ENCODE measurements at regions of chr1 and their contacts with region 1.

Region 1: DNA sequence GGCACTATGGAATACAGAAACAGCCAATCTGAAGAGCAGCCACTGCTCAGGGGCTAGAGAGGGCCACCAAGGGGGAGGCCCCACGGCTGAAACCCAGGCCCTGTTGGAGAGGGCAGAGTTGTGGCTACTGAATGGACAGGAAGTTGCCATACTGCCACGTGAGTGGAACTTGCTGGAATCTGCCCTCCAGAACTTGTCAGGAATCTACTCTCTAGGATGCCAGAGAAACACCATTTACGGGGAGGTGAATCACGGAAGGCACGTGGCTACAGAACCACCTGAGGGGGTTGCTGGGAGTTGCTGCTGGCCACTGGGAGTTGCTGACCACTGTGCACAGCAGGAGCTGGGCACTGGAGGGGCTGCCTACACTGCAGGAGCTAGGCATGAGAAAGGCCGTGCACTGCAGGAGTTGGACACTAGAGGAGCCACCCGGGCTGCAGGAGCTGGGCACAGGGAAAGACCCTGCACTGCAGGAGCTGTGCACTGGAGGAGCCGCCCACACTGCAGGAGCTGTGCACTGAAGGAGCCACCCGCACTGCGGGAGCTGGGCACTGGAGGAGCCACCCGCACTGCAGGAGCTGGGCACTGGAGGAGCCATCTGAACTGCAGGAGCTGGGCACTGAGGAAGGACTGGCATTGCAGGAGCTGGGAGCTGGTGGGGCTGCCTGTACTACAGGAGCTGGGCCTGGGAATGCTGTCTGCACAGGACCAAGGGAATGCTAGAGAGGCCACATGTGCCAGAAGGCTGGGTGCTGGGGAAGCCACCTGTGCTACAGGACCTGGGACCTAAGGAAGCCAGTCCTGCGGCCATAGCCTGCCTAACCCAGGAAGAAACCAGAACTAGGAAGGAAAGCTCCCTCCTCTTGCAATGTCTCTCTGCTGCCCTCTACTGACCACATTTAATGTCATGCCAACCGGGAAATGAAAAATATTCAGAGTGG is 343.4 kb downstream of the MATN1 start:
- DNase-seq: peak; percentile 50 to 57 (median 56)
- H3K4me3 ChIP-seq: no peak overlapping the region
- H3K4me3 Mint-ChIP-seq: peak overlapping the region in 1 of 8 donors; percentile 23
- H3K27ac ChIP-seq: no peak overlapping the region
- H3K27ac Mint-ChIP-seq: no peak overlapping the region
- H3K4me1 ChIP-seq: no peaks in the 10 kb centered on the region
- H3K4me1 Mint-ChIP-seq: peaks cover 3 to 12% (median 5%) of the 10 kb centered on the region in 4 donors
- H3K27me3 ChIP-seq: no peaks in the 10 kb centered on the region
- H3K27me3 Mint-ChIP-seq: peaks cover 3 to 17% of the 10 kb centered on the region in 2 donors

Region 2: GRCh38 chr1:29230553-29231378 is 1149.2 kb before region 1 on chr1 and contains the start of gene MECR:
- CTCF ChIA-PET with region 1: interaction called, 33 read pairs
- POLR2A ChIA-PET with region 1: no interaction called
- intact Hi-C with region 1: no loop called
- DNase-seq: peak; percentile 91 to 95 (median 92)
- H3K4me3 ChIP-seq: peak within 1 kb of the TSS; percentile 59 to 78
- H3K4me3 Mint-ChIP-seq: peak within 1 kb of the TSS; percentile 92 to 97 (median 94)
- H3K27ac ChIP-seq: peak within 1 kb of the TSS; percentile 61
- H3K27ac Mint-ChIP-seq: peak within 1 kb of the TSS; percentile 91 to 98 (median 96)
- H3K4me1 ChIP-seq: peaks cover 16% of the 10 kb centered on the region
- H3K4me1 Mint-ChIP-seq: peaks cover 15 to 25% (median 19%) of the 10 kb centered on the region in 4 donors
- H3K27me3 ChIP-seq: no peaks in the 10 kb centered on the region
- H3K27me3 Mint-ChIP-seq: peaks cover 3 to 7% of the 10 kb centered on the region in 2 donors
- total RNA-seq, gene MECR: 15.8 to 17.1 TPM

Region 3: GRCh38 chr1:29235955-29236684 is 1143.8 kb before region 1 on chr1 and contains the start of gene PTPRU:
- CTCF ChIA-PET with region 1: interaction called, 33 read pairs
- POLR2A ChIA-PET with region 1: no interaction called
- intact Hi-C with region 1: no loop called
- DNase-seq: peak; percentile 60 to 85 (median 77)
- H3K4me3 ChIP-seq: peak within 1 kb of the TSS; percentile 28 to 60
- H3K4me3 Mint-ChIP-seq: peak within 1 kb of the TSS; percentile 82 to 92 (median 87)
- H3K27ac ChIP-seq: no peak within 1 kb of the TSS
- H3K27ac Mint-ChIP-seq: peak within 1 kb of the TSS in 6 of 7 donors; percentile 33 to 86 (median 56)
- H3K4me1 ChIP-seq: peaks cover 17% of the 10 kb centered on the region
- H3K4me1 Mint-ChIP-seq: peaks cover 18 to 37% (median 20%) of the 10 kb centered on the region in 4 donors
- H3K27me3 ChIP-seq: peaks cover 19% of the 10 kb centered on the region
- H3K27me3 Mint-ChIP-seq: peaks cover 36 to 40% of the 10 kb centered on the region in 2 donors
- total RNA-seq, gene PTPRU: 0.38 TPM in 1 of 2 experiments, not detected in the other

Region 4: GRCh38 chr1:29793101-29793546 is 586.8 kb before region 1 on chr1:
- CTCF ChIA-PET with region 1: interaction called, 4 read pairs
- POLR2A ChIA-PET with region 1: no interaction called
- intact Hi-C with region 1: loop called (anchors 5 kb)
- DNase-seq: peak in 3 of 5 donors; percentile 10 to 27 (median 26)
- H3K4me3 ChIP-seq: no peak overlapping the region
- H3K4me3 Mint-ChIP-seq: no peak overlapping the region
- H3K27ac ChIP-seq: no peak overlapping the region
- H3K27ac Mint-ChIP-seq: no peak overlapping the region
- H3K4me1 ChIP-seq: no peaks in the 10 kb centered on the region
- H3K4me1 Mint-ChIP-seq: no peaks in the 10 kb centered on the region
- H3K27me3 ChIP-seq: no peaks in the 10 kb centered on the region
- H3K27me3 Mint-ChIP-seq: peaks cover 0 to 10% of the 10 kb centered on the region in 2 donors

Region 5: DNA sequence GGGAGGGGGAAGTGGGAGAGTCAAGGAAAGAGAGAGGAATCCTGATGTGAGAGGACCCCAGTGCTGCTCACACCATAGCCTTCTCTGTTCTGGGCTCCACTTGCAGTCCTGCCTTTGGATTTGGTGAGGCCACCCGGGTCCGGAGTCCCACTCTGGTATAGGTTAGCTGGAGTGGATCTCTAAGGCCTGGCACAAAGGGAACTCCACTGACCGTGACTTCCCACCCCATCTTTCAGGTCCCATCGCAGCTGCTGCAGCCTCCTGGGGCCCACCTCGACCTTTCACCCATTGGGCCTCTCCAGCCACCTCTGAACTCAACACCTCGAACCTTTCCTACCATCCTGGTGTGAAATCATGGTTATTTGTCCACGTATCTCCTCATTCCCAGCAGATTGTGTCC is 19.1 kb after region 1 on chr1:
- CTCF ChIA-PET with region 1: interaction called, 14 read pairs
- POLR2A ChIA-PET with region 1: no interaction called
- intact Hi-C with region 1: no loop called
- DNase-seq: no peak
- H3K4me3 ChIP-seq: no peak overlapping the region
- H3K4me3 Mint-ChIP-seq: no peak overlapping the region
- H3K27ac ChIP-seq: no peak overlapping the region
- H3K27ac Mint-ChIP-seq: no peak overlapping the region
- H3K4me1 ChIP-seq: no peaks in the 10 kb centered on the region
- H3K4me1 Mint-ChIP-seq: no peaks in the 10 kb centered on the region
- H3K27me3 ChIP-seq: no peaks in the 10 kb centered on the region
- H3K27me3 Mint-ChIP-seq: peaks cover 10% of the 10 kb centered on the region in 2 donors

Measured in CD4-positive, alpha-beta memory T cell (primary cell).